Activated naive CD4-positive, alpha-beta T cell treated with anti-CD3 and anti-CD28 coated beads, Interleukin-2, amount 10 ng/mL, durations not matched to agents 7 days and 5 days (primary cell): ENCODE measurements at regions of chr5 and their contacts with region 1.

Region 1: GRCh38 chr5:148730943-148731861 is 76.9 kb upstream of the HTR4 start:
- DNase-seq: peak; percentile 78
- H3K4me3 Mint-ChIP-seq: no peak overlapping the region
- H3K27ac Mint-ChIP-seq: no peak overlapping the region
- H3K4me1 Mint-ChIP-seq: peaks cover 2% of the 10 kb centered on the region
- H3K27me3 Mint-ChIP-seq: peaks cover 8% of the 10 kb centered on the region

Region 2: DNA sequence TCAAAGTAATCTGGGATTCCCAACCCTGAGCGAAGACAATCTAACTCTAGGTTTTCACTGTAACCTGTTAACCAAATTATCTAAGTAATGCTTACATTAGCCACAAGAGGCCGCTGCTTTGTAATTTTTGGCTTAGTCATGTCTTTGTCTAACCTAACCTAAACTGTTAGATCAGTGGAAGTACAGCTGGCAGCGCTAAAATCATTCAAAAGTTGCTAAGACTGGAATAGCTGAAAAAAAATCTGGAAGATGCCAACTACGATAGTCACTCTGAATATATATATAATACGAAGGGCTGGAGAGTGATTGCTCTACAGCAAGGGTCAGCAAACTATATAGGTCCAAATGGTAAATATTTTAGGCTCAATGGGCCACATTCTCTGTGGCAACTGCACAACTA is 287.2 kb before region 1 on chr5:
- CTCF ChIA-PET with region 1: interaction called, 83 read pairs
- DNase-seq: peak; percentile 54
- H3K4me3 Mint-ChIP-seq: no peak overlapping the region
- H3K27ac Mint-ChIP-seq: no peak overlapping the region
- H3K4me1 Mint-ChIP-seq: no peaks in the 10 kb centered on the region
- H3K27me3 Mint-ChIP-seq: no peaks in the 10 kb centered on the region

Region 3: GRCh38 chr5:148632255-148633066 is 98.7 kb before region 1 on chr5:
- CTCF ChIA-PET with region 1: no interaction called
- DNase-seq: no peak
- H3K4me3 Mint-ChIP-seq: no peak overlapping the region
- H3K27ac Mint-ChIP-seq: no peak overlapping the region
- H3K4me1 Mint-ChIP-seq: peaks cover 2% of the 10 kb centered on the region
- H3K27me3 Mint-ChIP-seq: peaks cover 10% of the 10 kb centered on the region

Region 4: GRCh38 chr5:148719605-148720004 is 11.6 kb before region 1 on chr5:
- CTCF ChIA-PET with region 1: interaction called, 16 read pairs
- DNase-seq: no peak
- H3K4me3 Mint-ChIP-seq: no peak overlapping the region
- H3K27ac Mint-ChIP-seq: no peak overlapping the region
- H3K4me1 Mint-ChIP-seq: no peaks in the 10 kb centered on the region
- H3K27me3 Mint-ChIP-seq: peaks cover 4% of the 10 kb centered on the region

Region 5: DNA sequence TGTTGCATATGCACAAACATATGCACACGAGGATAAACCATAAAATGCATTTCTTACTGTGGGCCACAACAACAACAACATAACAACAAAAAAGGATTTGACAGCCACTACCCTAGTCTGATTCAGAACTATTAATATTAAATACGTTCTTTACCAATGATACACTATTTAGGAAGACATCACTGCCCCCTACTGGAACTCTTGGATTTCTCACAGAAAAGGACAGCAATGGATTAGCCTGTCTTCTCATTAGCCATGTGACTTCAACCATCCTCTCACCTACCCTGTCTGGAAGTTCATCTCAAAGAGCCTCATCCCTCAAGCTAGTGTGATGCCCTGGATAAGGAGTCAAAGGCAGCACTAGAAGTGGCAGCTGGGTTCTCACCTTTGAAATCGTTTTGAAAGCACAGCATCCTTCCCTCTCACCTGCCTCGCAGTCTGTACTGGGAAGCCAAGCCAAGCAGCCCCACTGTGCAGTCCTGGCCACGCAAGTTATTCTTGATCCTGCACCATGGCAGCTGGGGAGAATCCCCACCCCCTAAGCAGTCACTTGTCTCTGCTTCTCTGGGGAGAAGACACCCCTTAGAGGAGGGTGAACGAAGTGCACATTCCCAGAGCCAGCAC is 267.1 kb after region 1 on chr5:
- CTCF ChIA-PET with region 1: interaction called, 10 read pairs
- DNase-seq: peak; percentile 35
- H3K4me3 Mint-ChIP-seq: no peak overlapping the region
- H3K27ac Mint-ChIP-seq: no peak overlapping the region
- H3K4me1 Mint-ChIP-seq: no peaks in the 10 kb centered on the region
- H3K27me3 Mint-ChIP-seq: peaks cover 18% of the 10 kb centered on the region

Region 6: DNA sequence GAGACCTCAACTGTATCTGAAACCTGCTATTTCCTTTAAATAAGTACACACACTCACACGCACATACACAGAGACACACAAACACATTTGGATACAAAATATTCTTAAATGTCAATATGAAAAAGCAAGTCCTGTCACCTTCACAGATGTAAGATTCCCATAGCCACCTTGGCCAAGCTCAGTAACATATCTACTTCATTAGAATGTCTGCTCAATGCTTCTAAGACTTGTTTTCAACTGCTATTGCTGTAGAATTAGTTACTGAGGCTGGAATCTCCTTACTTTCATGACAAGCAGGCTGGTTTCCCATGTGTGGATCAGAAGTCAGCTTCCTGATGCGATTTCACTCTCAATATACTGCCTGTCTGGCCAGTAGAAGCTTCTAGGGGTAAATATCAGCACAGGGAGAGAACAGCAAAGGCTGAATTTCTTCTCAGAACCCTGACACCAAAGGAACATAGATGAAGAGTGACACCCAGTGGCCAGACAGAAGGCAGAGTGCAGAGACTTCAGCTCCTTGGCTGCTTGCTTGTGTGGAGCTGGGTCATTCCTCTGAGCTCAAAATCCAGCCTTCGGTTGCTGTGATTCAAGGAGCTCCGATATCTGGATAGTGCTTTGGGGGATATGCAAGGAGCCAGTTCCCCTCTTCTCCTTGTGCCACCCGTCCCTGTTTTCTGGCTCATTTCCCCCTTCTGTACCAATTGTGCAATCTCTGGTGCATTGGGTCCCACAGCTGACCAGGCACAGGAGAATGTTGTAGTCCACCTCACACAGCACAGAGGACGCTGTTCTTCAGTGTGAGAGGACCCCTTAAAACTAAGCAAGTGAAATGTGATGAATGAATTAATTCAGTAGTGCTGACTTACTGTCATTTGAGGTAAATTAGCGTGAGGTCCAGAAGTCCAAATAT is 383.5 kb after region 1 on chr5:
- CTCF ChIA-PET with region 1: interaction called, 92 read pairs
- DNase-seq: peak; percentile 57
- H3K4me3 Mint-ChIP-seq: no peak overlapping the region
- H3K27ac Mint-ChIP-seq: no peak overlapping the region
- H3K4me1 Mint-ChIP-seq: no peaks in the 10 kb centered on the region
- H3K27me3 Mint-ChIP-seq: peaks cover 19% of the 10 kb centered on the region